ENCODE measurements at regions of chr22 and their contacts with region 1.

Region 1: GRCh38 chr22:20783844-20784723 is 10.2 kb downstream of the SERPIND1 start:
- DNase-seq: peak; percentile 64
- H3K4me3 Mint-ChIP-seq: no peak overlapping the region
- H3K27ac Mint-ChIP-seq: no peak overlapping the region
- H3K4me1 Mint-ChIP-seq: no peaks in the 10 kb centered on the region
- H3K27me3 Mint-ChIP-seq: no peaks in the 10 kb centered on the region
- CTCF ChIP-seq: peak; percentile 25

Region 2: GRCh38 chr22:20671409-20672081 is 112.5 kb before region 1 on chr22:
- CTCF ChIA-PET with region 1: no interaction called
- POLR2A ChIA-PET with region 1: no interaction called
- intact Hi-C with region 1: no loop called
- DNase-seq: no peak
- H3K4me3 Mint-ChIP-seq: no peak overlapping the region
- H3K27ac Mint-ChIP-seq: no peak overlapping the region
- H3K4me1 Mint-ChIP-seq: no peaks in the 10 kb centered on the region
- H3K27me3 Mint-ChIP-seq: peaks cover 36% of the 10 kb centered on the region
- CTCF ChIP-seq: no peak

Region 3: DNA sequence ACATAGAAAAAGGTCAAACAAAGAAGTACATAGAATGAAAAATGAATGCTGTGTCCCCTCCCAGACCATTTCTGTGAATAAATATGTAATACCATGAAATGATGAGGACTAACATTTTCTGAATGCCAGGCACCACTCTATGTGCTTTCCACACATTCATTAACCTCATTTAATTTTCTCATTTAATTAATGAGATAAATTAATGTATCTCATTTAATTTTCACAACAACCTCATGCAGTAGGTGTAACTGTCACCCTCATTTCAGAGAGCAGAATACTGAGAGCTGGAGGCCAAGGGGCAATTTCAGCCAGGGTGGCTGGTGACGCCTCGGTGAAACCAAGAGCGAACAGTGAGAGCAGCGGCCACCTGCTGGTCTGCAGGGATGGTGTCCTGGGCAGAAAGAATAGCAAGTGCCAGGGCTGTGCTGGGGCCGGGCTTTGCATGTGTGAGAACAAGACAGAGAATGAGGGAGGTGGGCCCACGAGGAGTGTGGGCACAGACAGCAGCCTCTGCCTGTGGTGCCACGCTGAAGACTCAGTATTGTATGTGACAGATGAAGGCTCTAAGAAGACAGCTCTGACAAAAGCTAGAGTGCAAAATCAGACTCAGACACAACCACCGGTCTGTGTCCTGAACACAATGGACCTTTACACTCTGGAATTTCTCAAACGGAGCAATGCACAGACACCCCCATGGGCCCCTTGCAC is 12.0 kb before region 1 on chr22:
- CTCF ChIA-PET with region 1: interaction called, 12 read pairs
- POLR2A ChIA-PET with region 1: no interaction called
- intact Hi-C with region 1: no loop called
- DNase-seq: no peak
- H3K4me3 Mint-ChIP-seq: no peak overlapping the region
- H3K27ac Mint-ChIP-seq: no peak overlapping the region
- H3K4me1 Mint-ChIP-seq: no peaks in the 10 kb centered on the region
- H3K27me3 Mint-ChIP-seq: no peaks in the 10 kb centered on the region
- CTCF ChIP-seq: no peak

Region 4: GRCh38 chr22:20803696-20804324 is 19.7 kb after region 1 on chr22:
- CTCF ChIA-PET with region 1: interaction called, 14 read pairs
- POLR2A ChIA-PET with region 1: no interaction called
- intact Hi-C with region 1: no loop called
- DNase-seq: peak; percentile 39
- H3K4me3 Mint-ChIP-seq: no peak overlapping the region
- H3K27ac Mint-ChIP-seq: peak overlapping the region; percentile 67
- H3K4me1 Mint-ChIP-seq: peaks cover 16% of the 10 kb centered on the region
- H3K27me3 Mint-ChIP-seq: no peaks in the 10 kb centered on the region
- CTCF ChIP-seq: peak; percentile 59

Region 5: GRCh38 chr22:20858615-20859416 is 74.7 kb after region 1 on chr22 and contains the starts of genes PI4KA and SNAP29:
- CTCF ChIA-PET with region 1: no interaction called
- POLR2A ChIA-PET with region 1: no interaction called
- intact Hi-C with region 1: no loop called
- DNase-seq: peak; percentile 98
- H3K4me3 Mint-ChIP-seq: peak within 1 kb of the TSS; percentile 87
- H3K27ac Mint-ChIP-seq: peak within 1 kb of the TSS; percentile 88
- H3K4me1 Mint-ChIP-seq: peaks cover 27% of the 10 kb centered on the region
- H3K27me3 Mint-ChIP-seq: no peaks in the 10 kb centered on the region
- CTCF ChIP-seq: no peak
- total RNA-seq, gene PI4KA: 39.0 and 41.3 TPM in 2 replicates
- total RNA-seq, gene SNAP29: 28.7 and 39.0 TPM in 2 replicates